Activated CD4-positive, alpha-beta memory T cell treated with anti-CD3 and anti-CD28 coated beads, Interleukin-2, amount 10 ng/mL, durations not matched to agents 7 days and 5 days (primary cell): ENCODE measurements at regions of chr2 and their contacts with region 1.

Region 1: DNA sequence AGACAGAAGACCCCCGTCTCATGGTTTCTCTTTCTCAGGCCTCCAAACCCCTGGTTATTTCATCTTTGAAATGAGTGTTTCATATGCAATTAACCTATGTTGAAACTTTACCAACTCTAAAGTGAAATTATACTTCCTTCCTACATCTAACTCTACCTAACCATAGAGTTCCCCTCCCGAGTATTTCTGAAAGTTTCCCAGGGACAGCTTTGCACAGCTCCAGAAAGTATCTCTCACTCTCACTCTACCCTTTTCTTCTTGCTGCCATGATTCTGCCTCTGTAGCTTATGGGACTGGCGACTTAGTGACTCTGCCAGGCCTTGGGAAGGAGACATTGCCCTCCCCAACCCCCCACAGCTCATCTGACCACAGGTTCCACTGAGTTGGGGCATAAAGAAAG is 107.9 kb downstream of the B3GNT2 start:
- DNase-seq: no peak
- H3K4me3 Mint-ChIP-seq: no peak overlapping the region
- H3K27ac Mint-ChIP-seq: peak overlapping the region; percentile 58
- H3K4me1 Mint-ChIP-seq: peaks cover 64% of the 10 kb centered on the region
- H3K27me3 Mint-ChIP-seq: peaks cover 6% of the 10 kb centered on the region

Region 2: GRCh38 chr2:62330959-62331358 is 27.2 kb after region 1 on chr2:
- CTCF ChIA-PET with region 1: interaction called, 11 read pairs
- POLR2A ChIA-PET with region 1: no interaction called
- DNase-seq: no peak
- H3K4me3 Mint-ChIP-seq: no peak overlapping the region
- H3K27ac Mint-ChIP-seq: no peak overlapping the region
- H3K4me1 Mint-ChIP-seq: peaks cover 7% of the 10 kb centered on the region
- H3K27me3 Mint-ChIP-seq: peaks cover 6% of the 10 kb centered on the region

Region 3: DNA sequence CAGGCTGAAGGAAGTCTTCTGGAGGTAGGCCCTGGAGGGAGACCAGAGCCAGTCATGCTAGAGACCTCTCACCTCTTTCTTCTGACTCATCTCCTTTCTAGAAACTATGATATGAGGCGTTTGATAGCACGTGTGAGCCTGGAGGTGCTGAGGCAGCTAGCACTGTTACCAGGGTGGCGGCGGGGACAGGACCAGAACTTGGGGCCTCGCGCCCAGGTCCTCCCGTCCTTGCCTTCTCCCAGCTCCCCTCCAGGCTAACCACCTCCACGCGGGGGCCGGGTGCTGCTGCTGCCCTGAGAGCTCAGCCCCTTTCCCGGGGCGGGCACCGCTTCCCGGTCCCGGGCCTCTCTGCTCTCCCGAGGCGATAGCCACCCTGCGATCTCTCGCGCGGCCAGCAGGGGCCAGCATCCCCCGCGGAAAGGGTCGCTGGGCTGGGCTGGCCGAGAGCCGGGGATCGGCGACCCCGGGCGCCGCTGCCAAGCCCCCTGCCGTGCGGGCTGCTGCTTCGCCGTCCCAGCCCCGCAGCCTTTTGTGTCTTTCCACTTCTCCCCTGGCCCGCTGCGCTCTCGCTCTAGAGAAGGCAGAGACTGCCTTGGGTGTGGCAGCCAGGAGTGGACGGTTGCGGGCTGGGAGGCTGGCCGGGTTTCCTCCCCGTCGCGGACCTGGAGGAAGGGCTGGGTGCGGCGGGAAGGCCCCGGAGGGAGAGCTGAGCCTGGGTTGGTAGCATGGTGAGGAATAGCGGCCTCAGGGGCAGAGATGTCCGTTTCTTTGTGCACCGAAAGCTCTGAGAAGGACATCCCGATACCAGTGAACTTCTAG is 153.1 kb after region 1 on chr2:
- CTCF ChIA-PET with region 1: no interaction called
- POLR2A ChIA-PET with region 1: no interaction called
- DNase-seq: peak; percentile 67
- H3K4me3 Mint-ChIP-seq: peak overlapping the region; percentile 41
- H3K27ac Mint-ChIP-seq: no peak overlapping the region
- H3K4me1 Mint-ChIP-seq: peaks cover 3% of the 10 kb centered on the region
- H3K27me3 Mint-ChIP-seq: no peaks in the 10 kb centered on the region